HCT116 (cell line): ENCODE measurements at regions of chr2 and their contacts with region 1.

Region 1: GRCh38 chr2:38377050-38377828 is at the start of gene ATL2:
- DNase-seq: peak; percentile 87
- ATAC-seq: peak; percentile 82
- H3K4me3 ChIP-seq: peak within 1 kb of the TSS; percentile 85 to 91
- H3K27ac ChIP-seq: peak within 1 kb of the TSS; percentile 94
- H3K4me1 ChIP-seq: peaks cover 16 to 25% of the 10 kb centered on the region in 2 experiments
- H3K27me3 ChIP-seq: no peaks in the 10 kb centered on the region
- CTCF ChIP-seq: no peak
- POLR2A ChIP-seq: peak; percentile 85
- RAD21 ChIP-seq: no peak
- total RNA-seq, gene ATL2: 80.7 TPM

Region 2: GRCh38 chr2:38465789-38466127 is 88.5 kb after region 1 on chr2:
- CTCF ChIA-PET with region 1: interaction called, 8 read pairs
- POLR2A ChIA-PET with region 1: interaction called, 5 read pairs
- RAD21 ChIA-PET with region 1: interaction called in 1 of 2 experiments, 3 read pairs
- intact Hi-C with region 1: loop called (anchors 1 kb)
- DNase-seq: peak; percentile 54
- ATAC-seq: peak; percentile 64
- H3K4me3 ChIP-seq: no peak overlapping the region
- H3K27ac ChIP-seq: no peak overlapping the region
- H3K4me1 ChIP-seq: peaks cover 23 to 35% of the 10 kb centered on the region in 2 experiments
- H3K27me3 ChIP-seq: peaks cover 5% of the 10 kb centered on the region; the same call in 1 of the 2 replicates
- CTCF ChIP-seq: peak; percentile 60 to 73 (median 72); a peak in 5 of 6 replicates
- POLR2A ChIP-seq: no peak
- RAD21 ChIP-seq: peak; percentile 80

Region 3: DNA sequence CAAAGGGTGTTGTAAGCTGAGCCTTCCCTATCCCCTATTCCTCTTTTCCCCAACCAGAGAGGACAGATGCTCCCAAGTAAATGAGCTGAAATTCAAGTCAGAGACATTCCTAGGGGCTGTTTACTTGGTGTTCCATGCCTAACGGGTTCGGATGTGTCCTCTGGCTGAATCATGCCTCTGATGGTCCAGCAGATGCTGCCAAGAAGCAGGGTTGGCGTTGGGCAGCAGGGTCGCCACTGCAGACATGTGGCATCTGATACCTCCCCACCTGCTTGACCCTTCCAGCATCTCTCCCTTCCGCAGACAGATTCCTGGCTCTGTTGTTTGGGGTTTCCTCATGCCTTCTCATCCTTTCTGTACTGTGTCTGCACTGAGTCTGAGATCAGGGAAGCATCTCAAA is 117.2 kb after region 1 on chr2:
- CTCF ChIA-PET with region 1: no interaction called
- POLR2A ChIA-PET with region 1: no interaction called
- RAD21 ChIA-PET with region 1: no interaction called
- intact Hi-C with region 1: no loop called
- DNase-seq: no peak
- ATAC-seq: no peak
- H3K4me3 ChIP-seq: no peak overlapping the region
- H3K27ac ChIP-seq: no peak overlapping the region
- H3K4me1 ChIP-seq: no peaks in the 10 kb centered on the region
- H3K27me3 ChIP-seq: no peaks in the 10 kb centered on the region
- CTCF ChIP-seq: no peak
- POLR2A ChIP-seq: no peak
- RAD21 ChIP-seq: no peak